Activated T-helper 1 cell treated with anti-CD3 and anti-CD28 coated beads, Interleukin-12 subunit alpha, Interleukin-12 subunit beta, Interleukin-2, Interleukin-4 antibody, amounts not matched to agents 30 ng/mL and 10 ng/mL and 1 ng/mL, durations not matched to agents 14 hours and 24 hours and 36 hours (primary cell): ENCODE measurements at regions of chr11 and their contacts with region 1.

Region 1: DNA sequence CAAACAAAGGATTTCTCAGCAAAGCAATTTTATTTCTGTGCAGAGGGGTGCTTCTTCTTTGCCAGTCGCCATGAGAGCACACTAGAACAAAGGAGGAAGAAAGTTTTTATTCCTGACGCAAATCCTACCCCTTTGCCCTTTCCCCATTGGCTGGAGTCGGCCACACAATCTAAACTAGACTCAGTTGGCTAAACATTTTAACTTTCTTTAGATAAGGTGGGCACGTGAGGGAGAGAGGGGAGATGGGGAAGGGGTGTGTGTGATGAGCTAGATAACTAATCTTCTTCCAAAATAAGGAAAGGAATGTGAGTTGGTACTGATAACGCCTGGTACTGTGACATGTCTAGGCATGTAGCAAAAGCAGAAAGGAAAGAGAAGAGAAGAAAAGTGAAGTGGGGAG is 626 bp downstream of the TRIM22 start:
- DNase-seq: no peak
- H3K4me3 Mint-ChIP-seq: peak overlapping the region; percentile 93
- H3K27ac Mint-ChIP-seq: peak overlapping the region; percentile 89
- H3K4me1 Mint-ChIP-seq: peaks cover 52% of the 10 kb centered on the region
- H3K27me3 Mint-ChIP-seq: no peaks in the 10 kb centered on the region

Region 2: DNA sequence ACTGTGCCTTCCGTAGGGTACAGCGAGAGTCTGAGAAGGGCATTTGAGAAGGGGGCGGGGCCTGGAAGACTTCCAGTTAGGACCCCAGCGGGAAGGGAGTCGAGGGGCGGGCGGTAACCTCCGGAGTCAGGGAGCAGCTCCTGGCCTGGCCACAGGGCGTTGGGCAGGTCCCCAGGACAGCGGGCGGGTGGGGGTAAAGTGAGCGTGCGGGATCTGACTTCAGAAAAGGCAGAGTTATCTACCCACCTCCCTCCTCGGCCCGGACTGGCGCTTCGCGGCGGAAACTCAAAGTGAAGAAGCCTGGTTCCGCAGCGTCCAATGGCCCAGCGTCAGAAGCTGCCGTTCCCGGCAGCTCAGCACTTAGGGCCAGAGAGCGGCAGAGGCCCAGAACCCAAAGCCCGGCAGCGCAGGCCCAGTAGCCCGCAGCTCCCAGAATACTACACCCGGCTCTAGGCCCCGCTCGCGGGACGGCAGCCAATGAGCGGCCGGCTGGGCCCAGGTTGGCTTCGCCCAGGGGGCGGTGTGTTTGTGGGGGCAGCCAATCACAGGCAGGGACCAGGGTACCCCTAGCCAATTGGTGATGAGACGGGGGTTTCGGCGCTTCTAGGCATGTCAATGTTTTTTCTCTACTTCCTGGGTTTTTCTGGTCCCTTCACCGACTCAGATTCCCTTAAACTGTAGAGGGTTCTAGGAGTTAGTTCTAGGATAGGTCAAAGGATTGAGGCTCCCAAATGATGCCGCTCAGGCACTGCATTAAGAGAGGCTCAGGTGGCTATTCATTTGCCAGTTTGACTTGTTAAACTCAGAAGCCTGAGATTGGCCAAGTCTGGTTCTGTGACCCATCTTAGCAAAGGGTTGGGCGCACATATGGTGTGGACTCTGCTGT is 1082.2 kb before region 1 on chr11 and contains the start of gene TRIM68:
- intact Hi-C with region 1: loop called (anchors 5 kb)
- DNase-seq: peak; percentile 94
- H3K4me3 Mint-ChIP-seq: peak within 1 kb of the TSS; percentile 92
- H3K27ac Mint-ChIP-seq: peak within 1 kb of the TSS; percentile 88
- H3K4me1 Mint-ChIP-seq: peaks cover 46% of the 10 kb centered on the region
- H3K27me3 Mint-ChIP-seq: no peaks in the 10 kb centered on the region
- total RNA-seq, gene TRIM68: 8.2 and 9.4 TPM in 2 replicates

Region 3: GRCh38 chr11:5600374-5600851 is 89.8 kb before region 1 on chr11:
- intact Hi-C with region 1: loop called (anchors 1 kb)
- DNase-seq: peak; percentile 45
- H3K4me3 Mint-ChIP-seq: no peak overlapping the region
- H3K27ac Mint-ChIP-seq: no peak overlapping the region
- H3K4me1 Mint-ChIP-seq: peaks cover 11% of the 10 kb centered on the region
- H3K27me3 Mint-ChIP-seq: peaks cover 1% of the 10 kb centered on the region

Region 4: GRCh38 chr11:5700421-5701054 is 10.3 kb after region 1 on chr11:
- intact Hi-C with region 1: loop called (anchors 1 kb)
- DNase-seq: no peak
- H3K4me3 Mint-ChIP-seq: no peak overlapping the region
- H3K27ac Mint-ChIP-seq: no peak overlapping the region
- H3K4me1 Mint-ChIP-seq: peaks cover 57% of the 10 kb centered on the region
- H3K27me3 Mint-ChIP-seq: no peaks in the 10 kb centered on the region

Region 5: DNA sequence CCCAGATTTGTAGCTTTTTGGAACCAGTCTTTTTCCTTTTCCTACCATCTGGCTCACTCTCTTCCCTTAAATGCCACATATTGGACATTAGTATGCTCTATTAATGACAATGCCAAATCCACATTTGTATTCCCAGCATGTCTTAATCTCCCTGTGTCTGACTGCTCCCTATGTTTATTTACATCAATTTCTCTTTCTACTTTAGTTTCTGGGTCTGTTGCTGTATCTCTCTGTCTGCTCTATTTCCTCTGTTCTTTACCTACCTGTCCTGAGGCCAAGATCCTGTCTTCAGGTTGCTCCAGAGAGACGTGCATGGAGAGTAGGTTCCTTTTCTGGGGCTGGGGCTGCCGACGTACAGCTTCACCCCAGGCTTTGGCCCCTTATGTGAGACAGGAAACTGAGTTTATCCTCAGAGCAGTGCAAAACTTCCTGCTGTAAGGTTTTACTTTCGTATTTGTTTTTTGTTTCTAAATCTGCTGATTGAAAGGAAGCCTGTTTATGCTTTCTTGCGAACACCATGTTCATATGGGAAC is 1055.9 kb after region 1 on chr11:
- intact Hi-C with region 1: loop called (anchors 5 kb)
- DNase-seq: peak; percentile 40
- H3K4me3 Mint-ChIP-seq: no peak overlapping the region
- H3K27ac Mint-ChIP-seq: no peak overlapping the region
- H3K4me1 Mint-ChIP-seq: no peaks in the 10 kb centered on the region
- H3K27me3 Mint-ChIP-seq: no peaks in the 10 kb centered on the region